ENCODE measurements at regions of chr3 and their contacts with region 1.

Region 1: GRCh38 chr3:194315088-194315964 is 35.8 kb downstream of the CPN2 start:
- DNase-seq: peak; percentile 59 to 90 (median 80)
- ATAC-seq: peak; percentile 92
- H3K4me3 ChIP-seq: peak overlapping the region; percentile 56
- H3K4me3 Mint-ChIP-seq: peak overlapping the region; percentile 75
- H3K27ac ChIP-seq: no peak overlapping the region
- H3K27ac Mint-ChIP-seq: no peak overlapping the region
- H3K4me1 ChIP-seq: peaks cover 15% of the 10 kb centered on the region
- H3K4me1 Mint-ChIP-seq: peaks cover 17% of the 10 kb centered on the region
- H3K27me3 ChIP-seq: peaks cover 16 to 20% of the 10 kb centered on the region in 2 experiments
- H3K27me3 Mint-ChIP-seq: peaks cover 35% of the 10 kb centered on the region
- CTCF ChIP-seq: peak; percentile 95

Region 2: GRCh38 chr3:192816351-192816750 is 1499.0 kb before region 1 on chr3:
- CTCF ChIA-PET with region 1: no interaction called
- POLR2A ChIA-PET with region 1: no interaction called
- intact Hi-C with region 1: loop called in 1 of 2 experiments (anchors 10 kb)
- DNase-seq: peak in 3 of 14 experiments; percentile 46 to 57 (median 55)
- ATAC-seq: no peak
- H3K4me3 ChIP-seq: no peak overlapping the region
- H3K4me3 Mint-ChIP-seq: no peak overlapping the region
- H3K27ac ChIP-seq: no peak overlapping the region
- H3K27ac Mint-ChIP-seq: no peak overlapping the region
- H3K4me1 ChIP-seq: peaks cover 12% of the 10 kb centered on the region
- H3K4me1 Mint-ChIP-seq: no peaks in the 10 kb centered on the region
- H3K27me3 ChIP-seq: no peaks in the 10 kb centered on the region
- H3K27me3 Mint-ChIP-seq: peaks cover 14% of the 10 kb centered on the region
- CTCF ChIP-seq: peak; percentile 40

Region 3: GRCh38 chr3:193665370-193665989 is 649.8 kb before region 1 on chr3:
- CTCF ChIA-PET with region 1: interaction called, 20 read pairs
- POLR2A ChIA-PET with region 1: interaction called, 8 read pairs
- intact Hi-C with region 1: loop called (anchors 1 kb)
- DNase-seq: peak in 3 of 14 experiments; percentile 39 to 55 (median 45)
- ATAC-seq: no peak
- H3K4me3 ChIP-seq: no peak overlapping the region
- H3K4me3 Mint-ChIP-seq: no peak overlapping the region
- H3K27ac ChIP-seq: no peak overlapping the region
- H3K27ac Mint-ChIP-seq: no peak overlapping the region
- H3K4me1 ChIP-seq: no peaks in the 10 kb centered on the region
- H3K4me1 Mint-ChIP-seq: no peaks in the 10 kb centered on the region
- H3K27me3 ChIP-seq: no peaks in the 10 kb centered on the region
- H3K27me3 Mint-ChIP-seq: no peaks in the 10 kb centered on the region
- CTCF ChIP-seq: peak; percentile 71

Region 4: GRCh38 chr3:194129581-194130133 is 185.7 kb before region 1 on chr3:
- CTCF ChIA-PET with region 1: interaction called, 13 read pairs
- POLR2A ChIA-PET with region 1: no interaction called
- intact Hi-C with region 1: no loop called
- DNase-seq: no peak
- ATAC-seq: no peak
- H3K4me3 ChIP-seq: no peak overlapping the region
- H3K4me3 Mint-ChIP-seq: no peak overlapping the region
- H3K27ac ChIP-seq: no peak overlapping the region
- H3K27ac Mint-ChIP-seq: no peak overlapping the region
- H3K4me1 ChIP-seq: peaks cover 20% of the 10 kb centered on the region
- H3K4me1 Mint-ChIP-seq: peaks cover 32% of the 10 kb centered on the region
- H3K27me3 ChIP-seq: peaks cover 35 to 39% of the 10 kb centered on the region in 2 experiments
- H3K27me3 Mint-ChIP-seq: peaks cover 42% of the 10 kb centered on the region
- CTCF ChIP-seq: no peak

Region 5: GRCh38 chr3:194351952-194352536 is 36.7 kb after region 1 on chr3:
- CTCF ChIA-PET with region 1: no interaction called
- POLR2A ChIA-PET with region 1: no interaction called
- intact Hi-C with region 1: no loop called
- DNase-seq: no peak
- ATAC-seq: no peak
- H3K4me3 ChIP-seq: no peak overlapping the region
- H3K4me3 Mint-ChIP-seq: no peak overlapping the region
- H3K27ac ChIP-seq: no peak overlapping the region
- H3K27ac Mint-ChIP-seq: no peak overlapping the region
- H3K4me1 ChIP-seq: no peaks in the 10 kb centered on the region
- H3K4me1 Mint-ChIP-seq: no peaks in the 10 kb centered on the region
- H3K27me3 ChIP-seq: no peaks in the 10 kb centered on the region
- H3K27me3 Mint-ChIP-seq: no peaks in the 10 kb centered on the region
- CTCF ChIP-seq: no peak